Posterior cingulate gyrus (tissue), 11 donors: ENCODE measurements at regions of chr4 and their contacts with region 1.

Region 1: DNA sequence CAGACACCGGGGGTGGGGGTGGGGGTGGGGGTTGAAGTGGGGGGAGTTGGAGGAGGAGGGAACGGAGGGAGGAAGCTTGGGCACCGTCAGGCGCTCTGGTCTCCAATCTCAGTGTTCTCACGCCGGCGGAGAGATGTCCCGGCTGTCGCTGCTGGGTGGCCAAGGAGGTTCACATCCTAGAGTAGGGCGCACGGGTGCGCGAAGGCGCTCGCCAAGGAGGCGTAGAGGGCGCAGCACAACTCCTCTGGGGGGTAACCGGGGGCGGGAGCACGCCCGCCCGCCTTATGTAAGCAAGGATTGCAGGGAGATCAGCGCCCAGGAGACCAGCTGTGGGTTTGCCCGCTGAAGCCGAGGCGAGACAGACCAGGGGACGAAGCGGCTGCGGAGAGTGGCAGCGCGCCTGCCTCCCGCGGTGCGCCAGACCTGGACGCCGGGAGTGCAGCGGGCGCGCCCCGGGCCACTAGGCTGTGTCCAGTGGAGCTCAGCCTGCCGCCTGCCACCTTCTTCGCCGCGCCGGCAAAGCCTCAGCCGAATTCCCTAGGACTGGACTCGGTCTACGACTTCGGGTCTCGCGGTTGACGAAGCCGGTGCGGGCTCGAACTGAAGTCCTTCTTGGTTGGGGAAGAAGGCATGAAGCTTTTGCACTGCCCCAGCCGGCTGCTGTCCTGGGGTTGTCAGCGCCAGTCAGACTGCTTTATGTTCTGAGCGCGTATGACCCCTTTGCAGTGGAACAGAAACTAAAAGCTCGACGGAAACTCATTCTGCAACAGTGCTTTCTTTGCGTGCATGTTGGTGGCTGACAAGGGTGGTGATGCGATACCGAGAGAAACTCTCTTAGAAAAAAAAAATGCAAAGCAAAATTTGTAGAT is 707 bp upstream of the UNC5C start:
- DNase-seq: peak in 9 of 10 donors; percentile 58 to 94 (median 79)

Region 2: DNA sequence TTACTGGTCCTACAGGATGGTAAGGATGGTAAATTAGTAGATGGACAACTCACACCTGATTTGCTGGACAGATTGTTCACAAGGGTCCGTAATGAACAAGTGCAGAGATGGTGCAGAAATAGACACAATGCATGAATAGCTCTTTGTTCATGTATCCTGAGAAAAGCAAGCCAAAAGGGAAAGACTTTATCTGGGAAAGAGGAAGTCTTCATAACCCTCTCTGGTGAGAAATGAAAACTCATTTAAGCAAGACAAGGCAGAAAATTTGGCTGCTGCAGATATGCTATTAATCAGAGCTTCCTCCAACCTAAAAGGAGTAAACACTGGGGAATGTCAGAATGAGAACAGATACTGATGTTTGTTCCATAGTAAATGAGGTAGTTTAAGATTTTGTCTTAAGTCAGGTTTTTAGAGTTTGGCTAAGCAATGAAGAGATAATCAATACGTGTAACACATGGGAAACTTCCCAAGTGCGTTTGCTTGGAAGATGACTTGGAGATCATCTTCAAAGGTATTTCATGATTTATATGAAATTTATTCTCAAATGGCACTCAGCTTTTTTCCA is 944.2 kb before region 1 on chr4:
- intact Hi-C with region 1: no loop called
- DNase-seq: no peak

Region 3: DNA sequence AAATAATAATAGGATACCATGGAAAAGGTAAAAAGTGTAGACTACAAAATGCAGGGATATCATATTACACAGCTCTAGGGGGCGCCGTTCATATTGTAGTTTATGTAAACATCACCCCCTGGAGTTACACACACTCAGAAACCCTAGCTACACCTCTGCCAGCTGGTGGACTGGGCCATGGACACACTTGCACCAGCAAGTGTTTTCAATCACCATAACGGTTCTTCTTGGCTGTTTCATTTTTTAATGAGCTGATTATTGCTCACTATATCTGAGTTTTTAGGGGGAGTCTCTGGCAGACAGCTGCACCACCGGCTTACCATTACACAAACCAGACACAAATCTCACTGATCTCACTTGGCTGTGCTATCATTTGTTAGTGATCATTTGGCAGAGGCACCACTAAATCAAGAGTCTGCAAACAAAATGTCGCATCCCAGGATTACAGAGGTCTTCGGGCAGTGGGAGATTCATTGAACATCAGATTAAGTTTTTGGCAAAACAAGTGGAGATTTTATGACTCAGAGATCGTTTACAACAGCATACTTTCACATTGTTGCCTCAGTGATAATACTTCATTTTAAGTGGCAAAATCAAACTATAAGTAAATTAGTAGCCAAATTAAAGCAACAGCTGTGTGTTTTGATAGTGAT is 186.4 kb before region 1 on chr4:
- intact Hi-C with region 1: loop called (anchors 10 kb)
- DNase-seq: peak in 3 of 10 donors; percentile 30 to 86 (median 50)

Region 4: DNA sequence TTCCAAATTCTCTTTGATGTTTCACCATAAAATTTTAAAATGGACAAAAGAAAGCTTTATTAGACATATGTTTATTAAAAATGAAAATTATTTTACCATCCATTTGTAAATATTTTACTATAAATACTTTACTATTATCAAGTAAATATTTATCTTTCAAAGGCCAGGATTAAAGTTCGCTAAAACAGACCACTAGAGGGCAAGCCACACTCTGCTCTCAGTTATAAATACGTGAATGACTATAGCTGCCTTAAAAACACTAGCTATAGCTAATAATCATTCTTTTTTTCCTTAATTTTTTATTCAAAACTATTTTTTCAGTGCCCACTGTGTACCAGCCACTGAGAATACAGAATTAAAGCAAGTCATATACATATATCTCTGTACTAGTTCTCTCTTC is 39.3 kb before region 1 on chr4:
- intact Hi-C with region 1: loop called (anchors 5 kb)
- DNase-seq: no peak

Region 5: GRCh38 chr4:95693594-95693993 is 144.1 kb after region 1 on chr4:
- intact Hi-C with region 1: no loop called
- DNase-seq: no peak